ENCODE measurements at regions of chr7 and their contacts with region 1.

Region 1: DNA sequence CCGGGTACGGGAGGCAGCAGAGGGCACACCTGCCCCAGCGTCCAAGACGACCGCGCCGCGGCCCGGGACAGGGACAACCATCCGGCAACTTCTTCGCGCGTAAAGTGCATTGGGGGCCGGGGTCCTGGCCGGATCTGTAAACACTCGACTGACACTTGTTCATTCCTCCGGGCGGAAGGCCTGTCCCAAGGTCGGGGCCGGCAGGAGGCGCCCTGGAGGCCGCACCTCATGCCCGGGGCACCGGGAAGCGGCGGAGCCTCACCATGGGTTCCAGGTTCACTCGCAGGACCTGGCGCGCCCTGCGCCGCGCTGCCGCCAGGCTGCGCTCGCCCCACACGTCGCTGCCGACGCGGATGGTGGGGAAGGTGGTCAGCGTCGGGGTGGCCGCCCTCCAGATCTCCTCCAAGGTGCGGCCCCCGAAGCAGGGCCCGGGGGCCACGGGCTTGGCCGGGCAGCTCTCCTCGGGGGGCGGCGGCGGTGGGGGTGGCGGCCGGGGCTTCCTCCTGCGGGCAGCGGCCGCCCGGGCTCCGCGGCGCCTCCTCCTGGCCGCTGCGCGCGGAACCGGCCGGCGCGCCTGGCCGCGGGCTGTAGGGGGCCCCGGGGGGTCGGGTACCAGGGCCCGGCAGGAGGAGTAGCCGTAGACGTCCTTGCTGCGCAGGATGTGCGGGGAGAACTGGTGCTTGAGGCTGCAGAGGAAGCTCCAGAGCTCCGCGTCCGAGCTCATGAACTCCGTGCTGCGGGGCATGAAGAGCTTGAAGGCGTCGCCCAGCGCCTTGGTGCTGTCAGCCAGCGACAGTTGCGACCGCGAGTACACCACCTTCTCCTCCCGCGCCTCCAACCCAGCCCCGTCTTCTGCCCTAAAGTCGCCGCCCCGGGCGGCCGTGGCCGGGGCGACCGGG is 746 bp downstream of the CCDC71L start:
- DNase-seq: peak; percentile 72 to 79 (median 76)
- H3K4me3 ChIP-seq: peak overlapping the region; percentile 14 to 58
- H3K4me3 Mint-ChIP-seq: peak overlapping the region; percentile 85 to 92 (median 88)
- H3K27ac ChIP-seq: peak overlapping the region; percentile 68
- H3K27ac Mint-ChIP-seq: peak overlapping the region; percentile 87 to 97 (median 93)
- H3K4me1 ChIP-seq: peaks cover 35% of the 10 kb centered on the region
- H3K4me1 Mint-ChIP-seq: peaks cover 17 to 40% (median 29%) of the 10 kb centered on the region in 4 donors
- H3K27me3 ChIP-seq: no peaks in the 10 kb centered on the region
- H3K27me3 Mint-ChIP-seq: no peaks in the 10 kb centered on the region

Region 2: DNA sequence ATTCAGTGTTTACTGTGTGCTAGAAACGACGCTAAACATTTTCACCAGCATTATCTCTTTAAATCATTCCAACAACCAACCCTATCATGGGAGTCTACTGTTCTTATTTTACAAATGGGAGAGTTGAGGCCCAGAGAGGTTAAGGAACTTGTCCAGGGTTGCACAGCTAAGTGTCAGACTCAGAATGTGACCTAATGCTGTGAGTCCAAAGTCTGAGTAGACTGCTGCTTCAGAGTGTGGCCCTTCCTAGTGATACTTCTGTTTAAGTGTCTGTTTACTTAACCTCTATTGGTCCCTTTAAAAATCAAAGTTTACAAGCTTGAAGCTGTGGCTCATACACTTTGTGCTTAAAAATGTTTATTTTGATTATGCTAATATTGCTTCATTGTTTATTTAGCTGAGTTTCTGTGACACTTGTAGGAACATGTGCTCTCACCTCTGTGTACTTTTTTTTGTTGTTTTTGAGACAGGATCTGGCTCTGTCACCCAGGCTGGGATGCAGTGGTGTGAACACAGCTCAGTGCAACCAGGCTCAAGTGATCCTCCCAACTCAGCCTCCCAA is 463.7 kb before region 1 on chr7:
- CTCF ChIA-PET with region 1: no interaction called
- POLR2A ChIA-PET with region 1: no interaction called
- intact Hi-C with region 1: no loop called
- DNase-seq: no peak
- H3K4me3 ChIP-seq: no peak overlapping the region
- H3K4me3 Mint-ChIP-seq: no peak overlapping the region
- H3K27ac ChIP-seq: no peak overlapping the region
- H3K27ac Mint-ChIP-seq: no peak overlapping the region
- H3K4me1 ChIP-seq: no peaks in the 10 kb centered on the region
- H3K4me1 Mint-ChIP-seq: no peaks in the 10 kb centered on the region
- H3K27me3 ChIP-seq: no peaks in the 10 kb centered on the region
- H3K27me3 Mint-ChIP-seq: peaks cover 19 to 32% of the 10 kb centered on the region in 2 donors

Region 3: DNA sequence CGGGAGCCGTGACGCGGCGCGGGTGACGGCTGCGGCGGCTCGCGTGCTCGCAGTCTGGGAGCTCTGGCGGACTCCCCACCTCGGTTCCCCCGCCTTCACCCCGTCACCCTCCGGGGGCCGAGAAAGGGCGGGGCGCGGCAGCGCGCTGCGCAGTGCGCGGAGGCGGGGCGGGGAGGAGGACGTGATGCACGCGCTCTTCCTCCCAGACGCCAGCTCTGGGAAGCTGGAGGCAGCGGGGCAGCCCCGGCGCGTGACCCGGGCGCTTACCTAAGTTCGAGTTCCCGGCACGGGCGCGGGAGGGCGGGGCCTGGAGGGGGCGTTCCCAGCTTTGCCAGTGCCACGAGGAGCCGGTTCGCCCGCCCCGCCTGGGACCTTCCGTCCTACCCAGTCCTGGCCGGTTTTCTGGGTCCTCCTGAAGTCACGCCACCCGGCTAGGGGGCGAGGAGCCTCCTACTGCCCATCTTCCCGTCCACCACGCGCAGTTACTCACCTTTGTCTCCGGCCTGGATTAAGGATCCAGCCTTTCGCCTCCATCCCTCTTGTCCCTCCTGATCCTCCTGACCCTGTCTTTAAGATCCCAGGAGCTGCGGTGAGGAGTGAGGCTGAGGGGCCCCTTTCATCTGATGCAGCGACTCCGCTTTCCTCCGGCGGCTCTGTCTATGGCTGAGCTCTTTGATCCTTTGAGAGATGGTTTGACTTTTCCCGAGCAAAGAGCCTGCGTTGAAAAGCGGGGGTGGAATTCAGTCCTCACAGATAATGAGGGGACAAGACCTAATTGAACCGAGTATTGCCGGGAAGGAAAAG is 375.0 kb before region 1 on chr7:
- CTCF ChIA-PET with region 1: interaction called, 3 read pairs
- POLR2A ChIA-PET with region 1: interaction called, 9 read pairs
- intact Hi-C with region 1: loop called (anchors 1 kb)
- DNase-seq: peak; percentile 93 to 99 (median 97)
- H3K4me3 ChIP-seq: peak overlapping the region; percentile 86 to 97
- H3K4me3 Mint-ChIP-seq: peak overlapping the region; percentile 95 to 98 (median 96)
- H3K27ac ChIP-seq: peak overlapping the region; percentile 95
- H3K27ac Mint-ChIP-seq: peak overlapping the region; percentile 93 to 99 (median 98)
- H3K4me1 ChIP-seq: peaks cover 29% of the 10 kb centered on the region
- H3K4me1 Mint-ChIP-seq: peaks cover 14 to 28% (median 21%) of the 10 kb centered on the region in 4 donors
- H3K27me3 ChIP-seq: no peaks in the 10 kb centered on the region
- H3K27me3 Mint-ChIP-seq: no peaks in the 10 kb centered on the region

Region 4: GRCh38 chr7:106568680-106569499 is 91.3 kb before region 1 on chr7:
- CTCF ChIA-PET with region 1: no interaction called
- POLR2A ChIA-PET with region 1: no interaction called
- intact Hi-C with region 1: no loop called
- DNase-seq: no peak
- H3K4me3 ChIP-seq: no peak overlapping the region
- H3K4me3 Mint-ChIP-seq: no peak overlapping the region
- H3K27ac ChIP-seq: no peak overlapping the region
- H3K27ac Mint-ChIP-seq: no peak overlapping the region
- H3K4me1 ChIP-seq: no peaks in the 10 kb centered on the region
- H3K4me1 Mint-ChIP-seq: no peaks in the 10 kb centered on the region
- H3K27me3 ChIP-seq: no peaks in the 10 kb centered on the region
- H3K27me3 Mint-ChIP-seq: peaks cover 0 to 13% of the 10 kb centered on the region in 2 donors

Region 5: GRCh38 chr7:106598663-106599342 is 61.4 kb before region 1 on chr7:
- CTCF ChIA-PET with region 1: interaction called, 4 read pairs
- POLR2A ChIA-PET with region 1: interaction called, 3 read pairs
- intact Hi-C with region 1: loop called (anchors 2 kb)
- DNase-seq: peak; percentile 67 to 80 (median 72)
- H3K4me3 ChIP-seq: no peak overlapping the region
- H3K4me3 Mint-ChIP-seq: peak overlapping the region; percentile 28 to 70 (median 60)
- H3K27ac ChIP-seq: no peak overlapping the region
- H3K27ac Mint-ChIP-seq: peak overlapping the region in 5 of 7 donors; percentile 29 to 85 (median 57)
- H3K4me1 ChIP-seq: peaks cover 11% of the 10 kb centered on the region
- H3K4me1 Mint-ChIP-seq: peaks cover 5 to 9% (median 7%) of the 10 kb centered on the region in 4 donors
- H3K27me3 ChIP-seq: no peaks in the 10 kb centered on the region
- H3K27me3 Mint-ChIP-seq: peaks cover 2 to 4% of the 10 kb centered on the region in 2 donors

Region 6: DNA sequence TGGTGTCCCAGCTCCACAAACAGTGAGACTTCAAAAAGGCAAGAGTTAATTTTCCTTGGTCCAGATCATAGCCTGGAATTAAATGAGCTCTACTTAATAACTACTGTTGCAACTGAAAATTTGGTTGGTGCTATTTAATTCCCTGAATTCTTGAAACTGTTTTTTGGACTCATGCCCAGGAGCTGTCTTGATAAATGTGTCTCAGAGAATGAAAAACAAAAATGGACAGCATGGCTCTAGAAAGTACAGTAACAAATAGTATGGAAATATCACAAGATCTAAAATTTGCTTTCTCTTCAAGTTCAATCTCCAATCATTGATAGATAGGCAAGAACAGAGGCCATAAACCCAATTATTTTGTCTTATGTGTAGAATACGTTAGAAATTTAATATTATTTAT is 41.7 kb before region 1 on chr7:
- CTCF ChIA-PET with region 1: no interaction called
- POLR2A ChIA-PET with region 1: no interaction called
- intact Hi-C with region 1: no loop called
- DNase-seq: no peak
- H3K4me3 ChIP-seq: no peak overlapping the region
- H3K4me3 Mint-ChIP-seq: no peak overlapping the region
- H3K27ac ChIP-seq: no peak overlapping the region
- H3K27ac Mint-ChIP-seq: no peak overlapping the region
- H3K4me1 ChIP-seq: no peaks in the 10 kb centered on the region
- H3K4me1 Mint-ChIP-seq: no peaks in the 10 kb centered on the region
- H3K27me3 ChIP-seq: no peaks in the 10 kb centered on the region
- H3K27me3 Mint-ChIP-seq: peaks cover 0 to 3% of the 10 kb centered on the region in 2 donors

Region 7: GRCh38 chr7:106717955-106718871 is 58.0 kb after region 1 on chr7:
- CTCF ChIA-PET with region 1: interaction called, 44 read pairs
- POLR2A ChIA-PET with region 1: interaction called, 18 read pairs
- intact Hi-C with region 1: loop called (anchors 1 kb)
- DNase-seq: peak; percentile 40 to 82 (median 57)
- H3K4me3 ChIP-seq: peak overlapping the region in 1 of 2 donors; percentile 3
- H3K4me3 Mint-ChIP-seq: no peak overlapping the region
- H3K27ac ChIP-seq: no peak overlapping the region
- H3K27ac Mint-ChIP-seq: no peak overlapping the region
- H3K4me1 ChIP-seq: peaks cover 30% of the 10 kb centered on the region
- H3K4me1 Mint-ChIP-seq: peaks cover 0 to 16% (median 12%) of the 10 kb centered on the region in 4 donors
- H3K27me3 ChIP-seq: no peaks in the 10 kb centered on the region
- H3K27me3 Mint-ChIP-seq: peaks cover 0 to 1% of the 10 kb centered on the region in 2 donors

Region 8: DNA sequence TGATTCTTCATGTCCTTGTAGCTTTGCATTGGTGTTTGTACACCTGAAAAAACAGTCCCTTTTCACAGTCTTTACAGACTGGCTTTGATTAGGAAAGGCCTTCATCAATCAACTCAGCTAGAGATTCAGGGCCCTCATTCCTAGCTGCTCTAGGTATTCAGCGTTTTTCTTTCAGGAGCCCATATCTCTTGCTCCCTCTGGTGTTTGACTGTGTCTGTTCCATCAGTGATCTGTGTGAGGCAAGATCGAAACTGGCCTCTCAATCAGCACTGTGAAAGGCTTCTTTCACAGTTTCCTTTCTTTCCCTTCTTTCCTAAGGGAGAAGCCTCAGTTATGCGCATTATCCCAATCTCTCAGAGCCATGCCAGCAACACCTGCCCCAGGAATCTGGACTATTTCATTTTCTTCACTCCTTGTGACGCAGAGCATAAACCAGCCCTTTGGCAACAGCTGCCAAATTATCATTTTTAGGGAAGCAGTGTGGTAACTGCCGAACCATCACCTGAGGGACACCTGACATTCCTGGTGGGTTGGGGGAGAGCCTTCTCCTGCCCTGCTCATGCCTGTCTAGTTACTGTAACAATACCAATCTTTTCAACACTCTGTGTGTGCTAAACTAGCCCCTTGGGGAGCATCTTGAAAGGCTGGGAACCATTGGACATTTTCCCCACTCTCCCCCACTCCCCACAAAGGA is 76.4 kb after region 1 on chr7:
- CTCF ChIA-PET with region 1: interaction called, 120 read pairs
- POLR2A ChIA-PET with region 1: interaction called, 51 read pairs
- intact Hi-C with region 1: loop called (anchors 1 kb)
- DNase-seq: peak; percentile 61 to 68 (median 63)
- H3K4me3 ChIP-seq: no peak overlapping the region
- H3K4me3 Mint-ChIP-seq: peak overlapping the region in 5 of 8 donors; percentile 3 to 61 (median 57)
- H3K27ac ChIP-seq: no peak overlapping the region
- H3K27ac Mint-ChIP-seq: peak overlapping the region in 5 of 7 donors; percentile 18 to 86 (median 72)
- H3K4me1 ChIP-seq: peaks cover 7% of the 10 kb centered on the region
- H3K4me1 Mint-ChIP-seq: peaks cover 8 to 18% (median 13%) of the 10 kb centered on the region in 4 donors
- H3K27me3 ChIP-seq: no peaks in the 10 kb centered on the region
- H3K27me3 Mint-ChIP-seq: no peaks in the 10 kb centered on the region

Region 9: GRCh38 chr7:107044347-107045194 is 384.4 kb after region 1 on chr7 and contains the start of gene PRKAR2B:
- CTCF ChIA-PET with region 1: no interaction called
- POLR2A ChIA-PET with region 1: no interaction called
- intact Hi-C with region 1: loop called (anchors 5 kb)
- DNase-seq: peak; percentile 73 to 85 (median 80)
- H3K4me3 ChIP-seq: peak within 1 kb of the TSS; percentile 42 to 61
- H3K4me3 Mint-ChIP-seq: peak within 1 kb of the TSS; percentile 85 to 95 (median 89)
- H3K27ac ChIP-seq: no peak within 1 kb of the TSS
- H3K27ac Mint-ChIP-seq: peak within 1 kb of the TSS; percentile 21 to 92 (median 62)
- H3K4me1 ChIP-seq: peaks cover 15% of the 10 kb centered on the region
- H3K4me1 Mint-ChIP-seq: peaks cover 7 to 21% (median 10%) of the 10 kb centered on the region in 4 donors
- H3K27me3 ChIP-seq: peaks cover 30% of the 10 kb centered on the region
- H3K27me3 Mint-ChIP-seq: peaks cover 20 to 26% of the 10 kb centered on the region in 2 donors
- total RNA-seq, gene PRKAR2B: 0.29 to 0.47 TPM

Measured in CD4-positive, alpha-beta memory T cell (primary cell).